ENCODE measurements at regions of chr15 and their contacts with region 1.

Region 1: GRCh38 chr15:77024271-77025082 is 29.6 kb downstream of the PSTPIP1 start:
- DNase-seq: peak; percentile 53 to 91
- ATAC-seq: peak; percentile 38 to 83; a peak in 3 of 6 replicates
- H3K4me3 ChIP-seq: no peak overlapping the region
- H3K27ac ChIP-seq: no peak overlapping the region
- H3K4me1 ChIP-seq: no peaks in the 10 kb centered on the region
- CTCF ChIP-seq: peak; percentile 95
- EP300 ChIP-seq: no peak
- POLR2A ChIP-seq: no peak
- RAD21 ChIP-seq: peak; percentile 85 to 88

Region 2: GRCh38 chr15:76898102-76898501 is 126.4 kb before region 1 on chr15:
- CTCF ChIA-PET with region 1: no interaction called
- POLR2A ChIA-PET with region 1: no interaction called
- DNase-seq: no peak
- ATAC-seq: no peak
- H3K4me3 ChIP-seq: no peak overlapping the region
- H3K27ac ChIP-seq: no peak overlapping the region
- H3K4me1 ChIP-seq: no peaks in the 10 kb centered on the region
- CTCF ChIP-seq: no peak
- EP300 ChIP-seq: no peak
- POLR2A ChIP-seq: no peak
- RAD21 ChIP-seq: no peak

Region 3: GRCh38 chr15:76994971-76995945 is 29.2 kb before region 1 on chr15 and contains the start of gene PSTPIP1:
- CTCF ChIA-PET with region 1: interaction called, 11 read pairs
- POLR2A ChIA-PET with region 1: no interaction called
- DNase-seq: no peak
- ATAC-seq: no peak
- H3K4me3 ChIP-seq: no peak within 1 kb of the TSS
- H3K27ac ChIP-seq: peak within 1 kb of the TSS in 1 of 2 experiments; percentile 21; a peak in 1 of 6 replicates
- H3K4me1 ChIP-seq: peaks cover 15% of the 10 kb centered on the region
- CTCF ChIP-seq: no peak
- EP300 ChIP-seq: no peak
- POLR2A ChIP-seq: no peak
- RAD21 ChIP-seq: no peak
- polyA plus RNA-seq, gene PSTPIP1: not detected in 2 replicates

Region 4: DNA sequence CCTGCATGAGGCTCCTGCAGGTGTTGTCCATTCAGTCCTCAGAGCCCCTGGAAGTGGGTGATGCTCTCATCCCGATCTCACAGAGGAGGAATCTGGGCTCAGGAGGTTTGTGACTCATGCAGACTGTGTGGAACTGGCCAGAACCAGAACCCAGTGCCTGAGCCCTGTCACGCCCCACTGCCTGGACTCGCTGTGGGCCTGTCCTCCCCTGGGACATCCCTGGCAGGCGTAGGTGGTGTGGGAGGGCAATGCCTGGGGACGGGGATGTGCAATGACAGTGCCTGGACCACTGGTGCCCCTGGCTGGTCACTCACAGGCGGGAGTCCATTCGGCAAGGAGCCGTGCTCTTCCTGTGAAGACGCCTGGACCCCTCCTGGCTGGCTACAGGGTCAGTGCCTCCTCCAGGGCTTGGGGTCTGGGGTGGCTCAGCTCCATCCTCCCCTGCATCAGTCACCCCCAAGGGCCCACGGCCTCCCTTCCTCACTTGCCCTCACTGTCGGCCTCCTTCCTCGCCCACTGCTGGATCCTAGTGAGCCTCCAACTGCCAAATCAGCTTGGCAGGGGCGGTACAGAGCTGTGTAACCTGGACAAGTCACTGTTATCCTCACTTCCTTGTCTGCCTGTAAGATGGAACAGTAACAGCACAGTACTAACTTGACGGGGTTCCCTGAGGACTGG is 14.7 kb before region 1 on chr15:
- CTCF ChIA-PET with region 1: interaction called, 50 read pairs
- POLR2A ChIA-PET with region 1: no interaction called
- DNase-seq: no peak
- ATAC-seq: peak; percentile 15 to 22; a peak in 3 of 6 replicates
- H3K4me3 ChIP-seq: no peak overlapping the region
- H3K27ac ChIP-seq: no peak overlapping the region
- H3K4me1 ChIP-seq: no peaks in the 10 kb centered on the region
- CTCF ChIP-seq: no peak
- EP300 ChIP-seq: no peak
- POLR2A ChIP-seq: no peak
- RAD21 ChIP-seq: no peak

Region 5: DNA sequence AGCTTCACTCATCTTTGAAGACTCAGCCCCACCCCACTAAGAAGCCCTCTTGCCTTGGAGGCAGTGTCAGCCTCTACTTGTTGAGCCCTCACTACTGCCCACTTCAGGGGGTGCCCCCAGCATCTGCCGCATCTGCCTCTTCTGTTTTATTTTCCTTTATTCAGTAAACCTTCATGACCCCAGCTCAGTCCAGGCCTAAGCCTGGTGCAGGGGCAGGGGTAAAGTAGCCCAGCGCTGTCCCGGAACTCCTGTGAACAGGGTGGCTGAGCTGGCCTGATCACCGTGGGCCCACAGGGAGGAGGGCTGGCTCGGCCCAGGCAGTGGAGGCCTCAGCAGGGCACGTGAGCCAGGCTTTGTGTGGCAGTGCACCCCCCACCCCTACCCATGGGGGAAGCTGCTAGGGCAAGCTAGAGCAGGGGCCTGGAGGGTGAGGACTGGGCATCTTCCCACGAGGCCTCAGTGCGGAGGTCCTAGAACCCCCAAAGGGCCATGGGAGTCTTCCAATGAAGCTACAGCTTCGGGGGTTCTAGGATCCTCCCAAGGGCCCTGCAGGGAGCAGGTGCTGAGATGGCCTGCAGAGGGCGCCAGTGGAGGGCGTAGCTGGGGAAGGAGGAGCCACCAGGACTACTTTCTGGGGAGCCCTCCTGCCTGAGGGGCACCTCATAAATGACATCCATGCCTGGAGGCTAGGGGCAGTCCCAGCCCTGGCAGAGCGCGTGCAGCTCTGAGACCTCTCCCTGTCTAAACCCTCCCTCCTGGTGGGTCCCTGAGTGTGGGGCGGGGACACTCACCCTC is 10.4 kb after region 1 on chr15:
- CTCF ChIA-PET with region 1: interaction called, 76 read pairs
- POLR2A ChIA-PET with region 1: no interaction called
- DNase-seq: no peak
- ATAC-seq: peak in 1 of 2 experiments; percentile 55; a peak in 3 of 6 replicates
- H3K4me3 ChIP-seq: no peak overlapping the region
- H3K27ac ChIP-seq: no peak overlapping the region
- H3K4me1 ChIP-seq: no peaks in the 10 kb centered on the region
- CTCF ChIP-seq: peak; percentile 61
- EP300 ChIP-seq: no peak
- POLR2A ChIP-seq: no peak
- RAD21 ChIP-seq: peak; percentile 33 to 37; a peak in 2 of 5 replicates

Region 6: GRCh38 chr15:77044228-77045042 is 20.0 kb after region 1 on chr15:
- CTCF ChIA-PET with region 1: interaction called, 23 read pairs
- POLR2A ChIA-PET with region 1: no interaction called
- DNase-seq: no peak
- ATAC-seq: no peak
- H3K4me3 ChIP-seq: no peak overlapping the region
- H3K27ac ChIP-seq: no peak overlapping the region
- H3K4me1 ChIP-seq: no peaks in the 10 kb centered on the region
- CTCF ChIP-seq: no peak
- EP300 ChIP-seq: no peak
- POLR2A ChIP-seq: no peak
- RAD21 ChIP-seq: no peak

Region 7: DNA sequence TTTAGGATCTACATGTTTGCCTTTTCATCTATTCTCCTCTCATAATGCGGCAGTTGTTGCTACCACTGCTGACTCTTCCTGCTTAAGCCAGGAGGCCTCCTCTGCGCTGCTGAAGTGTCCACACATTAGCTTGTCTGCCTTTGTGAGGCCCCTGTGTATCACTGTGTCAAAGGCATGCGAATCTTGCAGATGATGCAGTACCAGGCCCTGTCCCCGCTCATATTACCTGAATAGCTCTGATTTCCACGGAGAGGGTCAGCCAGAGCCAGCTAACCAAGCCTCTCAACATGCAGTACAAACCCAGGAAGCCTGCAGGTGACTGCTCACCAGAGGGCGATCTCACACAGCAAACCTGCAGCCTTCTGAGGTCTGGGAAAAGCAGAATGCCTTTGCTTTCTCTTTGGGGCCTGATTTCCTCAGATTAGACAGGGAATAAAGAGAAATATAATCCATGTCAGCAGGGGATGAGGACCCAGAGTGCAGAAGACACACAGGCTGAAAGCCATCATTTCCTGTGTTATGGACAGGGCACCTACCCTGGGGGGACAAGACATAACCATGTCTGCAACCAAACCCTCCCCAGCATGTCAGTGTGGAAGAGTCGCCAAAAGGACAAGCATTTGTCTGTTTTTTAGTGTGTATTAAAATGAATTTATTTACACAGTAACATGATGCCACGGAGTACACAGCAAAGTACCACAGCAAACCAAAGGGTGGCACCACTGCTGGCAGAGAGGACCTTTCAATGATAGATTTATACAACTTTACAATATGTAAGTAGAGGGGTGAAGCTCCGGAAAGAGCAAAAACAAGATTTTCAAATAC is 83.3 kb after region 1 on chr15:
- CTCF ChIA-PET with region 1: interaction called, 11 read pairs
- POLR2A ChIA-PET with region 1: no interaction called
- DNase-seq: peak; percentile 53 to 60
- ATAC-seq: peak; percentile 89 to 95
- H3K4me3 ChIP-seq: no peak overlapping the region
- H3K27ac ChIP-seq: no peak overlapping the region
- H3K4me1 ChIP-seq: no peaks in the 10 kb centered on the region
- CTCF ChIP-seq: peak; percentile 72
- EP300 ChIP-seq: no peak
- POLR2A ChIP-seq: no peak
- RAD21 ChIP-seq: peak; percentile 80 to 89

Region 8: DNA sequence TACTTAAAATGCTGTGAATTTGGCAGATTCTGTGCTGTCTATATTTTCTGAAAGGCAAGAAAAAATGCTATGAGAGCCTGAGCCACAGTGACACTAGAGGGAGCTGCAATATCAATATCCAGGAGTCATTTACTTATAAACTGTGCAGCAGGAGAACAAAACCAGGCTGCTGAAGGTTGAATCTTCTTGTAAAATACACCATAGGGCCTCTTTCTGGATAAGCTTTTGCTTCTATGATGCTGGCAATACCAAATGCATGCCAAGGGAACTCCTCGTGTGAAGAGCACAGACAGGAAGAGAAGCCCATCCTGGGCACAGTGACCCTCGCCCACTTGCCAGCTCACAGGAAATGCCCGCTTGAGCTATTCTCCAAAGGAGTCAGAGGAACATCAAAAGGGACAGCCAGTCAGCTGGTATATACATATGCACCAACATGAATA is 94.4 kb after region 1 on chr15:
- CTCF ChIA-PET with region 1: interaction called, 14 read pairs
- POLR2A ChIA-PET with region 1: no interaction called
- DNase-seq: peak; percentile 64 to 74
- ATAC-seq: peak; percentile 83 to 93
- H3K4me3 ChIP-seq: no peak overlapping the region
- H3K27ac ChIP-seq: no peak overlapping the region
- H3K4me1 ChIP-seq: no peaks in the 10 kb centered on the region
- CTCF ChIP-seq: peak; percentile 96
- EP300 ChIP-seq: no peak
- POLR2A ChIP-seq: no peak
- RAD21 ChIP-seq: peak; percentile 93